AG04450 (cell line): ENCODE measurements at regions of chr4 and their contacts with region 1.

Region 1: GRCh38 chr4:173257732-173258717 is 76.1 kb downstream of the HMGB2 start:
- DNase-seq: peak; percentile 44
- H3K4me3 ChIP-seq: no peak overlapping the region
- H3K27ac ChIP-seq: no peak overlapping the region
- H3K27me3 ChIP-seq: no peaks in the 10 kb centered on the region
- CTCF ChIP-seq: peak; percentile 91

Region 2: GRCh38 chr4:173005912-173006633 is 252.0 kb before region 1 on chr4:
- CTCF ChIA-PET with region 1: interaction called, 334 read pairs
- POLR2A ChIA-PET with region 1: no interaction called
- DNase-seq: no peak
- H3K4me3 ChIP-seq: no peak overlapping the region
- H3K27ac ChIP-seq: no peak overlapping the region
- H3K27me3 ChIP-seq: peaks cover 7% of the 10 kb centered on the region
- CTCF ChIP-seq: no peak

Region 3: GRCh38 chr4:173019711-173020110 is 238.3 kb before region 1 on chr4:
- CTCF ChIA-PET with region 1: interaction called, 334 read pairs
- POLR2A ChIA-PET with region 1: no interaction called
- DNase-seq: no peak
- H3K4me3 ChIP-seq: no peak overlapping the region
- H3K27ac ChIP-seq: no peak overlapping the region
- H3K27me3 ChIP-seq: peaks cover 5% of the 10 kb centered on the region
- CTCF ChIP-seq: no peak

Region 4: DNA sequence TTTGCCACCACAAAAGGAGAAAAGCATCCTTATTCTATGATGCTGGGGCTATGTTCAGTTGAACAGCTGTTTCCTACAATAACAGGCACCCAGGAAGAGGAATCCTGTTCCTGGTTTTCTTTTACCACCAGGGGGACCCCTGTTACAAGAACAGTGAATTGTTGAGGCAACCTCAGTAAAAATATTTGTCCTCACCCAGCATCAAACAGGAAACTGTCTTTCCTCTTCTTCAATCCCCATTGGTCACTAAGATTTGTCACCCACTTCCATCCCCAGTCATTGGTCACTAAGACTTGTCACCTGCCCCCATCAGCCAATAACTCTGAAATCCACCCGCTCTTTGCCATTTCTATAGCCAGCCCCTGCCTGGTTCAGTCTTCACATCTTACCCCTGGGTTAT is 232.9 kb before region 1 on chr4:
- CTCF ChIA-PET with region 1: interaction called, 103 read pairs
- POLR2A ChIA-PET with region 1: no interaction called
- DNase-seq: peak; percentile 65
- H3K4me3 ChIP-seq: no peak overlapping the region
- H3K27ac ChIP-seq: no peak overlapping the region
- H3K27me3 ChIP-seq: peaks cover 7% of the 10 kb centered on the region
- CTCF ChIP-seq: peak; percentile 79

Region 5: GRCh38 chr4:173168396-173169177 is 89.4 kb before region 1 on chr4 and contains the start of gene GALNT7:
- CTCF ChIA-PET with region 1: interaction called, 13 read pairs
- POLR2A ChIA-PET with region 1: interaction called, 6 read pairs
- DNase-seq: no peak
- H3K4me3 ChIP-seq: peak within 1 kb of the TSS; percentile 87
- H3K27ac ChIP-seq: peak within 1 kb of the TSS; percentile 68
- H3K27me3 ChIP-seq: no peaks in the 10 kb centered on the region
- CTCF ChIP-seq: no peak
- polyA plus RNA-seq, gene GALNT7: 30.9 and 47.6 TPM in 2 replicates

Region 6: GRCh38 chr4:173270312-173271027 is 12.4 kb after region 1 on chr4:
- CTCF ChIA-PET with region 1: interaction called, 13 read pairs
- POLR2A ChIA-PET with region 1: no interaction called
- DNase-seq: no peak
- H3K4me3 ChIP-seq: no peak overlapping the region
- H3K27ac ChIP-seq: no peak overlapping the region
- H3K27me3 ChIP-seq: no peaks in the 10 kb centered on the region
- CTCF ChIP-seq: no peak

Region 7: DNA sequence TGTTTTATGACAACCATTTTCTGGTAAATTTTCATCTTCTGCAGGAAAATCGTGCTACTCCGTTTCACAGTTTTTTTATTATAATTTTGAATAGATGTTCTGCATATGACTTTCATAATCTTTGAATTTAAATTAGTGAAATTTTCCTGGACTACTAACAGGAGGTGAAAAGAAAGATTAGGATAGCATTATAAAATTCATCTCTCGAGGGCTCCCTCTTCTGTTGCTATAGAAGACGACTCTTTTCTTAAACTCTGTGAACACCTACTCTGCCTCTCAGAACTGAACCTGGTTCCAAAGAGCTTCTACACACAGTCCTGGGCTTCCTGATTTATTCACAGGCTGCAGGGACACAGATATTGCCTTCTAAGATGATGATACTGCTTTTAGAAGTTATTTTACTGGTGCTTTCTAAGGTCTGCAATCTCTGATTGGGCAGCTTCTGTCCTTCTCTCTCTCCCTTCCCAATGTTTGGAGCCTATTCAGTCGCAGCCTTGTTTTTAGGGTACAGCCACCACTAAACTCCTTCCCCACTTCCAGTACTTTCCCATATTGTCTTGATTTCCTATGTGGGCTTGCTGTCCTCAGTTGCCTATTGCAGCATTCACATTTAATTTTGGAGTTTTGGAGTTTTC is 102.7 kb after region 1 on chr4:
- CTCF ChIA-PET with region 1: no interaction called
- POLR2A ChIA-PET with region 1: no interaction called
- DNase-seq: no peak
- H3K4me3 ChIP-seq: no peak overlapping the region
- H3K27ac ChIP-seq: no peak overlapping the region
- H3K27me3 ChIP-seq: no peaks in the 10 kb centered on the region
- CTCF ChIP-seq: peak; percentile 55; the same call in 1 of the 2 replicates